CD4-positive, alpha-beta T cell (primary cell): ENCODE measurements at regions of chr1 and their contacts with region 1.

Region 1: GRCh38 chr1:23743287-23744052 is at the start of gene ELOA:
- DNase-seq: peak; percentile 59 to 90 (median 74)
- ATAC-seq: peak; percentile 93
- H3K4me3 ChIP-seq: peak within 1 kb of the TSS; percentile 80
- H3K4me3 Mint-ChIP-seq: peak within 1 kb of the TSS; percentile 95
- H3K27ac ChIP-seq: peak within 1 kb of the TSS; percentile 79 to 90
- H3K27ac Mint-ChIP-seq: peak within 1 kb of the TSS; percentile 88
- H3K4me1 ChIP-seq: peaks cover 24% of the 10 kb centered on the region
- H3K4me1 Mint-ChIP-seq: peaks cover 54% of the 10 kb centered on the region
- H3K27me3 ChIP-seq: no peaks in the 10 kb centered on the region
- H3K27me3 Mint-ChIP-seq: no peaks in the 10 kb centered on the region
- CTCF ChIP-seq: no peak
- total RNA-seq, gene ELOA: 28.1 to 33.0 TPM

Region 2: DNA sequence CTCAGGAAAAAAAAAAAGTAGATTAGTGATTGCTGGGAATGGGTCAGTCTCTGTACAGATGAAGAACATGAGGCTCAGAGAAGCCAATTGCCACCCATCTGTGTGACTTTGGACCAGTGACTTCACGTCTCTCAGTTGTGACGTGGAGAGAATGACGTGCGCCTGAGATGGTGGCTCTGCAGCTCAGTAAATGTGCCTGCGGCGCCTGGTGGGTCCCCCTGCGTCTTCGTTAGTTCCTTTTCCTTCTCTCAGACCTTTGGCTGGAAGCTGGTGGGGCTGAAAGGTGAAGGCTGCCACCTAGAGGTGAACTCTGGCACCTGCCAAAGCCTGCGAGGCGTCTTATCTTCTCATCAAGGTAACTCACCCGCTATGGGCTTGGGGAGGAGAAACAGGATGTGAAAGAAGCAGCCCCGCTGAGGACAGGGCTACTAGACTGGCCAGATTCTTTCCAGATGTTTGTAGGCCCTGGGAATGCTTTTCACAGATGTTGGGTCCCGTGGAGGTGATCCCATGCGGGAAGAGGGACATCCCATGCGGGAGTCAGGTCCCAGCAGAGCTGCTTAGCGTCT is 203.7 kb before region 1 on chr1:
- CTCF ChIA-PET with region 1: no interaction called
- POLR2A ChIA-PET with region 1: no interaction called
- intact Hi-C with region 1: loop called in 1 of 2 experiments (anchors 5 kb)
- DNase-seq: peak; percentile 86 to 96 (median 90)
- ATAC-seq: peak; percentile 96
- H3K4me3 ChIP-seq: no peak overlapping the region
- H3K4me3 Mint-ChIP-seq: peak overlapping the region; percentile 11
- H3K27ac ChIP-seq: no peak overlapping the region
- H3K27ac Mint-ChIP-seq: peak overlapping the region; percentile 50
- H3K4me1 ChIP-seq: peaks cover 17% of the 10 kb centered on the region
- H3K4me1 Mint-ChIP-seq: peaks cover 18% of the 10 kb centered on the region
- H3K27me3 ChIP-seq: no peaks in the 10 kb centered on the region
- H3K27me3 Mint-ChIP-seq: no peaks in the 10 kb centered on the region
- CTCF ChIP-seq: peak; percentile 94

Region 3: DNA sequence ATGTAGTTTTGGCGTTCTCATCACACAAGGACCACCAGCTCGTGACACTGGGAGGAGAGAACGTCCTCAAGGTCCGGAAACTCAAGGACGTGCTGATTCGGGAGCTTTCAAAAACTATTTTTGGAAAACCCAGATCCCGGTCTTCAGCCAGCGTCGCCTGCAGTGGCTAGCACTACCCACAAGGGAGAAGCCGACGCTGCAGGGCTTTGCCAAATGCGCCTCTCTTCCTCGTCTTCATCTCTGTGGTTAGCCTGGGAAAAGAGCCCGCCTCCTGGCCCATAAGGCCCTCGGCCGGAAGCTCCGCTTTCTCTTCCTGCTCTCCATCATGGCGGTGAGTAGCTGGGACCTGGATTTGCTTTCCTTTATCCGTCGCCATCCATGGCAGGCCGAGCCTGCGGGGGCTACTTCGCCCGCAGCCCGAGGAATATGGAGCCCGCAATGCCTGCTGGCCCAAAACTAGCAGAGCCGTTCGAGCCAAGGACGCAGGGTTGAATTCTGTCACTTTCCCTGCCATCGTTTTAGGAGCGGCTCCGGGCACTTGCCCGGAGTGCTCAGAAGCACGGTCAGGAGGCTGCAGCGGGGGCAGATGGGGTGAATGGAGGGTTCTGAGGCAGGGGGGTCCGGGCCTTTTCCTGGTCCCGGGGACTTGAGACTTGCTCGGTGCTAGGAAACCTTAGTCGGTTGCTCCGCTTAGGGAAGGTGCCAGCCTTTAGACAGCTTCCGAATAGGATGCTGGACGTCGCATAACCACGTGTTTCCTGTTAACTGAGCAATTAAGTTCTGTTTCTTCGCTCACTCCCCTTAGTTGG is 51.8 kb before region 1 on chr1 and contains the start of gene RPL11:
- CTCF ChIA-PET with region 1: interaction called, 8 read pairs
- POLR2A ChIA-PET with region 1: interaction called, 27 read pairs
- intact Hi-C with region 1: loop called (anchors 1 to 5 kb)
- DNase-seq: peak; percentile 78 to 95 (median 85)
- ATAC-seq: peak; percentile 99
- H3K4me3 ChIP-seq: peak within 1 kb of the TSS; percentile 97
- H3K4me3 Mint-ChIP-seq: peak within 1 kb of the TSS; percentile 99
- H3K27ac ChIP-seq: peak within 1 kb of the TSS; percentile 55 to 87
- H3K27ac Mint-ChIP-seq: peak within 1 kb of the TSS; percentile 95
- H3K4me1 ChIP-seq: peaks cover 40% of the 10 kb centered on the region
- H3K4me1 Mint-ChIP-seq: peaks cover 47% of the 10 kb centered on the region
- H3K27me3 ChIP-seq: no peaks in the 10 kb centered on the region
- H3K27me3 Mint-ChIP-seq: no peaks in the 10 kb centered on the region
- CTCF ChIP-seq: peak; percentile 67
- total RNA-seq, gene RPL11: 2,191 to 2,374 TPM

Region 4: DNA sequence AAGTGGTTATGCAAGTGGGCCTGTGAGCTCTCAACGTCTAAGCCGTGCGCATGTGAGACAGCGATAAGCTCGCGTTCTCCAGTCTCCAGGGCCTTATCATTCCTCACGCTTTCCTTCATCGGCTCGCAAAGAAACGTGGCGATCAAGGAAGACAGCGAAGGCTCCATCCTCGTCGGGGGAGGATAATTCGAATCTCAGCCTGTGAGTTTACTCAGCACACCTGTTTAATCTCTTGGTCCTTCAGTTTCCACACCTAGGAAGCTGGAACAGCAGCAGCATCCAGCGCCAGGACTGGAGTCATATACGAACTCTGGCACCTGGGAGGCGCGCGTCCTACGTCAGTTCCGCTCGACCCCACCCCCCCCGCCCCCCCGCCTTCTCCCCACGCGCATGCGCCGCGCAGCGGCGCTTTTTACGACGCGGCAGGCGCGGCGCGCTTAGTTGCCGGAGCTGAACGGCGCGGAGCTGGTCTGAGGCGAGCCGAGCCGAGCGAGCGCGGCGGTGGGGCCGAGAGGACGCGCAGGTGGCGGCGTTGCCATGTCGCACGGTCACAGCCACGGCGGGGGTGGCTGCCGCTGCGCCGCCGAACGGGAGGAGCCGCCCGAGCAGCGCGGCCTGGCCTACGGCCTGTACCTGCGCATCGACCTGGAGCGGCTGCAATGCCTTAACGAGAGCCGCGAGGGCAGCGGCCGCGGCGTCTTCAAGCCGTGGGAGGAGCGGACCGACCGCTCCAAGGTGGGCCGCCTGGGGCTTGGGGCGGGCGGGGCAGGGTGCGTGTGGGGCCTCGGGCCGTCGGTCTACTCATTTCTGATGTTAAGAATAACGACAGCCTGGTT is 34.7 kb after region 1 on chr1 and contains the start of gene PITHD1:
- CTCF ChIA-PET with region 1: no interaction called
- POLR2A ChIA-PET with region 1: interaction called, 16 read pairs
- intact Hi-C with region 1: loop called in 1 of 2 experiments (anchors 5 kb)
- DNase-seq: peak; percentile 58 to 94 (median 78)
- ATAC-seq: peak; percentile 80
- H3K4me3 ChIP-seq: peak within 1 kb of the TSS; percentile 80
- H3K4me3 Mint-ChIP-seq: peak within 1 kb of the TSS; percentile 92
- H3K27ac ChIP-seq: peak within 1 kb of the TSS; percentile 81 to 89
- H3K27ac Mint-ChIP-seq: peak within 1 kb of the TSS; percentile 98
- H3K4me1 ChIP-seq: peaks cover 34% of the 10 kb centered on the region
- H3K4me1 Mint-ChIP-seq: peaks cover 46% of the 10 kb centered on the region
- H3K27me3 ChIP-seq: no peaks in the 10 kb centered on the region
- H3K27me3 Mint-ChIP-seq: no peaks in the 10 kb centered on the region
- CTCF ChIP-seq: no peak
- total RNA-seq, gene PITHD1: 110 to 111 TPM

Region 5: GRCh38 chr1:23790696-23791515 is 47.4 kb after region 1 on chr1 and contains the start of gene LYPLA2:
- CTCF ChIA-PET with region 1: interaction called, 3 read pairs
- POLR2A ChIA-PET with region 1: interaction called, 11 read pairs
- intact Hi-C with region 1: no loop called
- DNase-seq: peak; percentile 64 to 93 (median 80)
- ATAC-seq: peak; percentile 88
- H3K4me3 ChIP-seq: peak within 1 kb of the TSS; percentile 81
- H3K4me3 Mint-ChIP-seq: peak within 1 kb of the TSS; percentile 99
- H3K27ac ChIP-seq: peak within 1 kb of the TSS; percentile 77 to 85
- H3K27ac Mint-ChIP-seq: peak within 1 kb of the TSS; percentile 95
- H3K4me1 ChIP-seq: peaks cover 32% of the 10 kb centered on the region
- H3K4me1 Mint-ChIP-seq: peaks cover 28% of the 10 kb centered on the region
- H3K27me3 ChIP-seq: no peaks in the 10 kb centered on the region
- H3K27me3 Mint-ChIP-seq: no peaks in the 10 kb centered on the region
- CTCF ChIP-seq: no peak
- total RNA-seq, gene LYPLA2: 37.4 to 37.7 TPM

Region 6: DNA sequence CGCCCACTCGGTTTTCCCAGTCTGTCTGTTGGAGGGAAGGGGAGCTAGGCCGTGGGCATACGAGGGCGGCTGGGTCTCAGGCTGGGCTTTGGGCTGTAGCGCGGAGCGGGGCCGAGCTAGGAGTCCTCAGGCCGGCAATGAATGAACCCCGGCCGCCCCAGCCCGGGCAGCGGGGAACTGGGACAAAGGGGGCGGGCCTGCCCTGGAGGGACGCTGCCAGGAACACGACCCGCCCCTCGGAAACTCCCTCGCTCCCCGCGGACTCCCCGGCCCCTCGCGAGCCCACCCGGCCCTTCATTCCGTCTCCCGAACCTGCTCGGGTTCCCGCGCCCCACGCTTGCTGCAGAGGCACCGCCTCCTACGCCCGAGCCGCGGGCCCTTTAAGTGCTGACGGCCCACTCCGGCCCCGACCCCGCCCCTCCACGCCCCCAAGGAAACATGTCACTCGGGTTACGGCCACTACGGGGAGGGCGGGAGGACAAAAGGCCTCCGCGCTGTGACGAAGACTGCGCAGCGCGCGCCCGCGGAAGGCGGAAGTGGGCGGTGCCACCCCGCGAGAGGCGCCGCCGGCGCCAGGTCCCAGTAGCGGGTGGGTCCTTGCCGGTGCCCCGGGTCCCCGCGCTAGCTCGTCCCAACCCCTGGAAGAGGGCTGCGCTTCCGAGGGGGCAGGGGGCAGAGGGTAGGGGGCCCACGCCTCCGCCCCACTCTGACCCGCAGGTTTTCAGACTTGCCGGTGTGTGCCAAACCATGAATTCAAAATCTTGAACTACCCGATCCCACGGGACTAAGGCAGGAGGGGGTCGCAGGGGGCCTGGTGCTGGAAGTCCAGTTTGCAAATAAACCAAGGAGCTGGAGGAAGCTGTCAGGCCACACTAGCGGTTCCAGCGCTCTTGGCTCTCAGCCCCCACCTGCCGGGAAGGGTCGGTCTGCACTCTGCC is 57.2 kb after region 1 on chr1 and contains the start of gene GALE:
- CTCF ChIA-PET with region 1: no interaction called
- POLR2A ChIA-PET with region 1: interaction called, 5 read pairs
- intact Hi-C with region 1: loop called in 1 of 2 experiments (anchors 2 kb)
- DNase-seq: peak; percentile 94 to 99 (median 97)
- ATAC-seq: peak; percentile 90
- H3K4me3 ChIP-seq: peak within 1 kb of the TSS; percentile 81
- H3K4me3 Mint-ChIP-seq: peak within 1 kb of the TSS; percentile 97
- H3K27ac ChIP-seq: peak within 1 kb of the TSS; percentile 78 to 82
- H3K27ac Mint-ChIP-seq: peak within 1 kb of the TSS; percentile 92
- H3K4me1 ChIP-seq: peaks cover 27% of the 10 kb centered on the region
- H3K4me1 Mint-ChIP-seq: peaks cover 14% of the 10 kb centered on the region
- H3K27me3 ChIP-seq: no peaks in the 10 kb centered on the region
- H3K27me3 Mint-ChIP-seq: no peaks in the 10 kb centered on the region
- CTCF ChIP-seq: no peak
- total RNA-seq, gene GALE: 5.4 to 6.9 TPM

Region 7: DNA sequence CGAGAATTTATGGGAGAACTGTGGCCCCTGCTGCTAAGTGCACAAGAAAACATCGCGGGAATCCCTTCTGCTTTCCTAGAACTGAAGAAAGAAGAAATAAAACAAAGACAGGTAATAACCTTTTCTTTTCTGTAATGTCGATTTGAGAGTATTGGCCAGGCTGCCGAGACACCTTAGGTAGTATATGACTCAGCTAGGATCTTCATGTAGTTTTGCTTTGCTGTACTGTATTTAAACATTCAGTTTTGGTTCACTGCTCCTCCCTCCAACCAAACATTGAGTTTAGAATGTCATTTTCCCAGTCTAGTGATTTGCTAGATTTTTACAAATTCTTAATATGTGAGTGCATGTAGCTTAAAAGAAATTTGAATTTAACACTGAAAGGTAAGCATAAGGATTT is 905.4 kb after region 1 on chr1:
- CTCF ChIA-PET with region 1: no interaction called
- POLR2A ChIA-PET with region 1: no interaction called
- intact Hi-C with region 1: loop called in 1 of 2 experiments (anchors 5 kb)
- DNase-seq: no peak
- ATAC-seq: no peak
- H3K4me3 ChIP-seq: no peak overlapping the region
- H3K4me3 Mint-ChIP-seq: no peak overlapping the region
- H3K27ac ChIP-seq: no peak overlapping the region
- H3K27ac Mint-ChIP-seq: no peak overlapping the region
- H3K4me1 ChIP-seq: peaks cover 9% of the 10 kb centered on the region
- H3K4me1 Mint-ChIP-seq: peaks cover 59% of the 10 kb centered on the region
- H3K27me3 ChIP-seq: no peaks in the 10 kb centered on the region
- H3K27me3 Mint-ChIP-seq: no peaks in the 10 kb centered on the region
- CTCF ChIP-seq: no peak